ENCODE measurements at regions of chr20 and their contacts with region 1.

Region 1: DNA sequence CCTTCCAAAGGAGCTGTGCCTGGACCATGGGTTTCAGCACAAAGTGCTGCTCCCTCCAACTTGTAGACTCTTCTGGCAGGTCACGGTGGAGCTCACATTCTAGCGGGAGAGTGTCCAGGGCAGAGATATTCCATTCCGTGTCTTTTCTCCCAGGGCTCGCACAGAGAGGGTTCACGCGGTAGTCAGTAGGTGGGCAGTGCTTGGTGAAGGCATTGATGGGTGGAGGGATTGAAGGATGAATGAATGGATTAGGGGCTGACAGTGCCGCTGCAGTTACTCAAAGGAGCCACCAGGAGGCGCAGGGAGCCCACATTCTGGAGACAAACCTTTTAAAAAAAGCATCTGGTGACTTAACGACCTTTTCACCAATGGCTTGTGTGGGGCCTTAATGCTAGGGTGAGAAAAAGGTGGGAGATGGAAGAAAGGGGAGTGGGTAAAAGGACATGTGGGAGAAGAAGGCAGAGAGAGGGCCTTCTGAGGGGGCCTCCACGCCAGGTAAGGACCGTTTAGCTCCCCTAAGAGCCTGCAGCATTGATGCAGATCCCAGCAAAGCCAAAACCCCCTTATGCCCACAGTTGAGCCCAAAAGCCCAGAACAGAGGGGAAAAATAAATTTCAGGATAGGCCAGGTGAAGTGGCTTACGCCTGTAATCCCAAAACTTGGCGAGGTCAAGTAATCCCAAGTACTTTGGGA is 17.5 kb upstream of the FAM110A start:
- DNase-seq: no peak
- H3K4me3 ChIP-seq: no peak overlapping the region
- H3K27ac ChIP-seq: no peak overlapping the region
- H3K27me3 ChIP-seq: peaks cover 2% of the 10 kb centered on the region
- CTCF ChIP-seq: peak; percentile 98

Region 2: GRCh38 chr20:561437-562231 is 254.4 kb before region 1 on chr20:
- CTCF ChIA-PET with region 1: no interaction called
- POLR2A ChIA-PET with region 1: no interaction called
- DNase-seq: peak; percentile 16
- H3K4me3 ChIP-seq: no peak overlapping the region
- H3K27ac ChIP-seq: no peak overlapping the region
- H3K27me3 ChIP-seq: peaks cover 16% of the 10 kb centered on the region
- CTCF ChIP-seq: peak; percentile 100

Region 3: GRCh38 chr20:688809-689212 is 127.2 kb before region 1 on chr20:
- CTCF ChIA-PET with region 1: no interaction called
- POLR2A ChIA-PET with region 1: no interaction called
- DNase-seq: no peak
- H3K4me3 ChIP-seq: no peak overlapping the region
- H3K27ac ChIP-seq: no peak overlapping the region
- H3K27me3 ChIP-seq: peaks cover 18% of the 10 kb centered on the region
- CTCF ChIP-seq: no peak

Region 4: GRCh38 chr20:779771-780170 is 36.3 kb before region 1 on chr20:
- CTCF ChIA-PET with region 1: no interaction called
- POLR2A ChIA-PET with region 1: no interaction called
- DNase-seq: no peak
- H3K4me3 ChIP-seq: no peak overlapping the region
- H3K27ac ChIP-seq: no peak overlapping the region
- H3K27me3 ChIP-seq: no peaks in the 10 kb centered on the region
- CTCF ChIP-seq: no peak

Region 5: DNA sequence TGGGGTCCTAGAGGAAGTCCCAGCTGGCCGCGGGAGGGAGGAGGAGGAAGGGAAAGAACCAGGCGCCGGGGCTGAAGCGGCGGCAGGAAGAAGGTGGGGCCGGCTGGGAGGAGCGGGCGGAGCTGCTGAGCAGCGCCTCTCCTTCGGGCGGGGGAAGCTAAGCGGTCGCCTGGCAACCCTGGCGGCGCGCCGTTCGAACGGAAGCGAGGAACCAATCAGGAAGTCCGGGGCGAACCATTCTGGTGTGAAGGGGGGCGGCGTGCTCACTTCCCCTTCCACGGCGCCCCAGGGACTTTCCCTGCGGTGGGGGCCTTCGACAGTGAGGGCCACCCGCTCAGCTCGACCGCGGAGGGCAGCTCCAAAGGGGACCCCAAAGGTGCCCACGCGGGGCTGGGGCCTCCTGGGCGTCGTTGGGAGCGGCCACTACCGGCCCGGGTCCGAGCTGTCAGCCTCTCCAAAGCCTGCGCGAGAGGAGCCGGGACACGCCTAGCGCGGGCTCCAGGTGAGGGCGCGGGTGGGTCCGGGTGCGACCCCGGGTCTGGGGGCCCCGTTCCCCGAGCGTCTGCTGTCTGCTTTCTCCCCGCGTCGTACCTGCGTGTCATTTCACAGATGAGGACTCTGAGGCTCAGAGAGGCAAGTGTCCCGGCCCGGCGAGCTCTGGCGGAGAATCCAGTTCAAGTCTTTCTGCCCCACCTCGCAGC is 17.5 kb after region 1 on chr20 and contains the start of gene FAM110A:
- CTCF ChIA-PET with region 1: interaction called, 24 read pairs
- POLR2A ChIA-PET with region 1: interaction called, 13 read pairs
- DNase-seq: peak; percentile 81
- H3K4me3 ChIP-seq: peak within 1 kb of the TSS; percentile 85
- H3K27ac ChIP-seq: peak within 1 kb of the TSS; percentile 31
- H3K27me3 ChIP-seq: no peaks in the 10 kb centered on the region
- CTCF ChIP-seq: no peak
- polyA plus RNA-seq, gene FAM110A: 1.9 and 2.0 TPM in 2 replicates

Region 6: GRCh38 chr20:956330-956951 is 140.4 kb after region 1 on chr20:
- CTCF ChIA-PET with region 1: interaction called, 222 read pairs
- POLR2A ChIA-PET with region 1: no interaction called
- DNase-seq: peak; percentile 15
- H3K4me3 ChIP-seq: no peak overlapping the region
- H3K27ac ChIP-seq: no peak overlapping the region
- H3K27me3 ChIP-seq: peaks cover 6% of the 10 kb centered on the region
- CTCF ChIP-seq: peak; percentile 97

Region 7: DNA sequence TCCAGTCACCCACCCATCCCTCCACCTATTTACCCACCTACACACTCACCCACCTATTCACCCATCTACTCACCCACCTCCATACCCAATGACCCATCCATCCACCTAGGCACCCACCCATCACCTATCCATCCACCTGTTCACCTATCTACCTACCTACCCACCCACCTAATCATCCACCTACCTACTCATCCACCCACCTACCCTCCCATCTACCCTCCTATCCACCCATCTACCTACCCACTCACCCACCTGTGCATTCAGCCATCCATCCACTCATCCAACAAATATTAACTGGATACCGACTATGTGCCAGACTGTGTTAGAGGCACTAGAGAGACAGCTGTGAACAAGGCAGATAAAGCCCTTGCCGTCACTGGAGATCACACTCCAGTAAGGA is 145.7 kb after region 1 on chr20:
- CTCF ChIA-PET with region 1: interaction called, 222 read pairs
- POLR2A ChIA-PET with region 1: no interaction called
- DNase-seq: no peak
- H3K4me3 ChIP-seq: no peak overlapping the region
- H3K27ac ChIP-seq: no peak overlapping the region
- H3K27me3 ChIP-seq: peaks cover 6% of the 10 kb centered on the region
- CTCF ChIP-seq: no peak

Region 8: GRCh38 chr20:1108437-1108920 is 292.4 kb after region 1 on chr20:
- CTCF ChIA-PET with region 1: interaction called, 12 read pairs
- POLR2A ChIA-PET with region 1: no interaction called
- DNase-seq: no peak
- H3K4me3 ChIP-seq: no peak overlapping the region
- H3K27ac ChIP-seq: no peak overlapping the region
- H3K27me3 ChIP-seq: peaks cover 3% of the 10 kb centered on the region
- CTCF ChIP-seq: peak; percentile 80

Measured in AG04450 (cell line).